ENCODE measurements at regions of chr6 and their contacts with region 1.

Region 1: GRCh38 chr6:26249957-26250697 is 114.9 kb upstream of the BTN3A2 start:
- DNase-seq: peak; percentile 79 to 88 (median 83)
- H3K4me3 ChIP-seq: peak overlapping the region; percentile 86 to 88
- H3K4me3 Mint-ChIP-seq: peak overlapping the region; percentile 92 to 99 (median 98)
- H3K27ac ChIP-seq: peak overlapping the region; percentile 59
- H3K27ac Mint-ChIP-seq: peak overlapping the region; percentile 85 to 97 (median 94)
- H3K4me1 ChIP-seq: peaks cover 25% of the 10 kb centered on the region
- H3K4me1 Mint-ChIP-seq: peaks cover 28 to 53% (median 40%) of the 10 kb centered on the region in 4 donors
- H3K27me3 ChIP-seq: no peaks in the 10 kb centered on the region
- H3K27me3 Mint-ChIP-seq: no peaks in the 10 kb centered on the region

Region 2: GRCh38 chr6:26204332-26205165 is 45.6 kb before region 1 on chr6:
- CTCF ChIA-PET with region 1: interaction called, 25 read pairs
- POLR2A ChIA-PET with region 1: interaction called, 3 read pairs
- intact Hi-C with region 1: loop called (anchors 1 kb)
- DNase-seq: peak; percentile 85 to 95 (median 89)
- H3K4me3 ChIP-seq: peak overlapping the region; percentile 48 to 87
- H3K4me3 Mint-ChIP-seq: no peak overlapping the region
- H3K27ac ChIP-seq: peak overlapping the region; percentile 82
- H3K27ac Mint-ChIP-seq: no peak overlapping the region
- H3K4me1 ChIP-seq: peaks cover 39% of the 10 kb centered on the region
- H3K4me1 Mint-ChIP-seq: peaks cover 8 to 26% (median 13%) of the 10 kb centered on the region in 4 donors
- H3K27me3 ChIP-seq: no peaks in the 10 kb centered on the region
- H3K27me3 Mint-ChIP-seq: peaks cover 0 to 3% of the 10 kb centered on the region in 2 donors

Region 3: DNA sequence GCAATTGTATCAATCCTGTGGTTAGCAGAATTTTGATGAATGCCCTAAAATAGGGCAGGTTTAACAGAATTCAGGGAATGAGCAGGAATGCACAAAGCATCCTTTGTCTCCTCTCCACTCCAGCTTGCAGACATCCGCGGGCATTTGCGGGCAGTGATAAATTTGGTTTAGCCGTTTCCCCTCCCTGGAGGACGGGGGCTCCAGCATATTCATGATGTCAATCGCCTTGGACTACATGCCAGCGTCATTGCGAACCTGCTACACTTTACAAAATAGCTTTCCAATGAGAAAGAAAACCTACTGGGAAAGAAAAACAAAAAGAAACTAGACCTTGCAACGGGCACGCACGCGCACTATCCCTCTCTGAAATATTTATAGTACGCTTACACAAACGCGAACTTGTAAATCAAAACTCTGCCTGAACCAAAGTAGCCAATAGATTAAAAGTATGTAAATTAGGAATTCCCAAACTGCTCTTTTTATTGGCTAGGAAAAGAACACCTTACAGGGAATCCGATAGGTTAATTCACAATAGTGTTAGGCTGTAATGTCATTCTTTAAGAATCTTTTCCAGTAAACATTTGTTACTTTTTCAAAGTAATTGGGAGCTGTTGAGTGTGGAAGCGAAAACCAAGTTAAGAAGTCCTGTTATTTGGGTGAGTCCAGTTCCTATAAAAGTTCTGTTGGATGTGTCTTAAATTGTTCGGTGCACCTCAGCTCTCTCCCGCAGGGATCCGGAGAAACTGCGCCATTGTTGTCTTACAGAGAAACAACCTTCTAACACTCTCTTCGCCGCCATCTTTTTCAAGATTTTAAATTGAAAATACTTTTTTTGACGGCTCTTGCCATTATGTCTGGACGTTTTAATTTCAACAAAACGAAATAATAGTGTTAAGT is 26.2 kb before region 1 on chr6:
- CTCF ChIA-PET with region 1: interaction called, 18 read pairs
- POLR2A ChIA-PET with region 1: no interaction called
- intact Hi-C with region 1: loop called (anchors 2 kb)
- DNase-seq: peak; percentile 74 to 87 (median 84)
- H3K4me3 ChIP-seq: peak overlapping the region; percentile 45 to 82
- H3K4me3 Mint-ChIP-seq: no peak overlapping the region
- H3K27ac ChIP-seq: peak overlapping the region; percentile 69
- H3K27ac Mint-ChIP-seq: no peak overlapping the region
- H3K4me1 ChIP-seq: peaks cover 21% of the 10 kb centered on the region
- H3K4me1 Mint-ChIP-seq: peaks cover 6 to 8% (median 7%) of the 10 kb centered on the region in 4 donors
- H3K27me3 ChIP-seq: no peaks in the 10 kb centered on the region
- H3K27me3 Mint-ChIP-seq: no peaks in the 10 kb centered on the region